HAP-1 (cell line): ENCODE measurements at regions of chr5 and their contacts with region 1.

Region 1: DNA sequence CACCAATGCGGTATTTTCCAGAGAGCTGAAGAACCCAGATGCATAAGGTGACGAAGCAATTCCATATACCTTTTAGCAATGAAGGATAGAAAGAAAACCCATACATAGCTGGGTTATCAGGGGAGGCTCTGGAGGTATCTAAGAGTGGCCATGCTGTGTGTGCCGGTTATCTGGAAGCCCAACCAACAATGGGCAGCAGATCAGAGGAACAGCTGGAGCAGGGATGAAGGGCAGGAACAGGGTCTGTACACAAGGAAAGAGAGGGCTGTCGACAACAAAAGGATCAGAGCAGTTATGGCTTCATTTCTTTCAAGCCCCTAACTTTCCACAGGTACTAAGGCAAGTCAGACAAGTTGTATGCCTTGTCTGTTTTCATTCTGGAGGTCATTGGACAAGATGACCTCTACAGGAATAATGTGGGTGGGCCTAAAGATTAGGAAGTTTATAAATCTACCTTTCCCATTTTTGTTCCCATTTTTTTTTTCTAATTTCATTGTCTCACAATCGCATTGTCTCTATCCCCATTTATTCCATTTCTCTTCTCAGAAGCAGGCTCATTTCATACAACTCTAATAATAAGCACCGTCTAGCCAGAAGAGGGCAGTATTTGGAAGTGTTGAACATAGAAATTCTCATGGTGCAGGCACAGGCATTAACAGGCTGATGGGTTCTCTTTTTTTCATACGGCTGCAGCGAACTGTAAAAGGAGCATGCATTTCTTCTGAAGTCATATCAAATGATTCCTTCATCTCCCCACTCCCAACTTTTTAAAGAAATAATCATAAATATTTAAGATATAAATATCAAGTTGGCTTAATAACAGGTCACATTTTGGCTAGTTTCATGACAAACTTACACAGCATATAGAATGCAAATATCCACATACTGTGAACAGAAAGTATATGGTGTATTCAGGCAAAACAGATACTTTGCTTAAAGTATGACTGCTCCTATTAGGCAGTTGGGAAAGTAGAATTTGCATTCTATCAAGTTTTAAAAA is 63.5 kb downstream of the ZNF474 start:
- DNase-seq: peak; percentile 71 to 78
- H3K4me3 ChIP-seq: no peak overlapping the region
- H3K4me1 ChIP-seq: peaks cover 3% of the 10 kb centered on the region; the same call in 1 of the 2 replicates
- H3K27me3 ChIP-seq: no peaks in the 10 kb centered on the region

Region 2: DNA sequence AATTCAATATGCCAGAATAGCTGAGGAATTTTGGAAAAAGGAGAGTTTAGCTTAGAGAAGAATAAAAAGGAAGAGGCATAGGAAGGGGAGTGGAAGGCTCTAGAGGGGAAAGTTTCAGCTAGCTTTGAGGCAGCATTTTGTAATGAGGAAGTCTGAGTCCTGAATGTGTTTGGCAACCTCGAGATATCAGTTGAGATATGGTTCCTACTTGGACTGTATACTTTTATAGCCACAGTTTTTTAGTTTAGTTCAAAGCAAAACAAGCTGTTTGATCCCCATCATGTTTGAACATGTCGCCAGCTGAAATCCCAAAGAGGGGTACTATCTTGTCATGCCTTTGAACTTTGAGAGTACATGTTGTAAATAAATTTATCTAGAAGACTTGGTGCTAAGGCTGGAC is 900.1 kb before region 1 on chr5:
- in situ Hi-C with region 1: no loop called
- DNase-seq: no peak
- H3K4me3 ChIP-seq: no peak overlapping the region
- H3K4me1 ChIP-seq: peaks cover 2% of the 10 kb centered on the region; the same call in 1 of the 2 replicates
- H3K27me3 ChIP-seq: no peaks in the 10 kb centered on the region

Region 3: GRCh38 chr5:121993209-121993608 is 199.6 kb before region 1 on chr5:
- in situ Hi-C with region 1: no loop called
- DNase-seq: no peak
- H3K4me3 ChIP-seq: no peak overlapping the region
- H3K4me1 ChIP-seq: no peaks in the 10 kb centered on the region
- H3K27me3 ChIP-seq: no peaks in the 10 kb centered on the region

Region 4: GRCh38 chr5:122262108-122262507 is 69.3 kb after region 1 on chr5:
- in situ Hi-C with region 1: no loop called
- DNase-seq: no peak
- H3K4me3 ChIP-seq: no peak overlapping the region
- H3K4me1 ChIP-seq: peaks cover 16% of the 10 kb centered on the region
- H3K27me3 ChIP-seq: no peaks in the 10 kb centered on the region

Region 5: GRCh38 chr5:122286541-122286940 is 93.7 kb after region 1 on chr5:
- in situ Hi-C with region 1: no loop called
- DNase-seq: no peak
- H3K4me3 ChIP-seq: no peak overlapping the region
- H3K4me1 ChIP-seq: peaks cover under 1% of the 10 kb centered on the region; the same call in 1 of the 2 replicates
- H3K27me3 ChIP-seq: no peaks in the 10 kb centered on the region

Region 6: GRCh38 chr5:122421374-122422079 is 228.7 kb after region 1 on chr5:
- in situ Hi-C with region 1: loop called (anchors 5 kb)
- DNase-seq: no peak
- H3K4me3 ChIP-seq: no peak overlapping the region
- H3K4me1 ChIP-seq: peaks cover 32% of the 10 kb centered on the region
- H3K27me3 ChIP-seq: no peaks in the 10 kb centered on the region

Region 7: DNA sequence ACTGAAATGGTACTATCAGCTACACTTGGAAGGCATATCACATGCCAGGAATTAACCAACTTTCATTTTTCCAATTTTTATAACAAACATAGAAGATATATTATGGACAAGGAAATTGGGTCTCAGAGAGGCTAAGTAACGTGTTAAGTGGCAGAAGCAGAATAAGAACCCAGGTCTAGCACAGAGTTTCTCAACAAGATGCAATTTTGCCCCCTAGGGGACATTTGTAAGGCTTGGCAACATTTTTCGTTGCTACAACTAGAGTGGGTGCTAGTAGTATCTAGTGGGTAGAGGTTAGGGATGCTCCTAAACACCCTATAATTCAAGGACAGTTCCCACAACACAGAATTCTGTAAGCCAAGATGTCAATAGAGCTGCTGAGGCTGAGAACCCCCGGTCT is 299.9 kb after region 1 on chr5:
- in situ Hi-C with region 1: loop called (anchors 10 kb)
- DNase-seq: no peak
- H3K4me3 ChIP-seq: no peak overlapping the region
- H3K4me1 ChIP-seq: no peaks in the 10 kb centered on the region
- H3K27me3 ChIP-seq: no peaks in the 10 kb centered on the region